Activated CD8-positive, alpha-beta memory T cell treated with anti-CD3 and anti-CD28 coated beads, Interleukin-2, amount 10 ng/mL, durations not matched to agents 7 days and 5 days (primary cell): ENCODE measurements at regions of chr3 and their contacts with region 1.

Region 1: GRCh38 chr3:32428092-32429068 is 36.7 kb downstream of the CMTM7 start:
- DNase-seq: peak; percentile 75
- ATAC-seq: peak; percentile 50
- H3K4me3 Mint-ChIP-seq: peak overlapping the region; percentile 61
- H3K27ac Mint-ChIP-seq: peak overlapping the region; percentile 99
- H3K4me1 Mint-ChIP-seq: peaks cover 91% of the 10 kb centered on the region
- H3K27me3 Mint-ChIP-seq: no peaks in the 10 kb centered on the region

Region 2: GRCh38 chr3:32282578-32283154 is 145.7 kb before region 1 on chr3:
- CTCF ChIA-PET with region 1: no interaction called
- DNase-seq: no peak
- ATAC-seq: no peak
- H3K4me3 Mint-ChIP-seq: no peak overlapping the region
- H3K27ac Mint-ChIP-seq: no peak overlapping the region
- H3K4me1 Mint-ChIP-seq: peaks cover 20% of the 10 kb centered on the region
- H3K27me3 Mint-ChIP-seq: peaks cover 3% of the 10 kb centered on the region

Region 3: GRCh38 chr3:32401556-32402081 is 26.8 kb before region 1 on chr3:
- CTCF ChIA-PET with region 1: interaction called, 21 read pairs
- DNase-seq: peak; percentile 81
- ATAC-seq: peak; percentile 87
- H3K4me3 Mint-ChIP-seq: peak overlapping the region; percentile 76
- H3K27ac Mint-ChIP-seq: peak overlapping the region; percentile 93
- H3K4me1 Mint-ChIP-seq: peaks cover 65% of the 10 kb centered on the region
- H3K27me3 Mint-ChIP-seq: no peaks in the 10 kb centered on the region

Region 4: GRCh38 chr3:32414520-32415202 is 13.7 kb before region 1 on chr3:
- CTCF ChIA-PET with region 1: interaction called, 12 read pairs
- DNase-seq: peak; percentile 79
- ATAC-seq: peak; percentile 95
- H3K4me3 Mint-ChIP-seq: peak overlapping the region; percentile 41
- H3K27ac Mint-ChIP-seq: peak overlapping the region; percentile 86
- H3K4me1 Mint-ChIP-seq: peaks cover 66% of the 10 kb centered on the region
- H3K27me3 Mint-ChIP-seq: no peaks in the 10 kb centered on the region

Region 5: DNA sequence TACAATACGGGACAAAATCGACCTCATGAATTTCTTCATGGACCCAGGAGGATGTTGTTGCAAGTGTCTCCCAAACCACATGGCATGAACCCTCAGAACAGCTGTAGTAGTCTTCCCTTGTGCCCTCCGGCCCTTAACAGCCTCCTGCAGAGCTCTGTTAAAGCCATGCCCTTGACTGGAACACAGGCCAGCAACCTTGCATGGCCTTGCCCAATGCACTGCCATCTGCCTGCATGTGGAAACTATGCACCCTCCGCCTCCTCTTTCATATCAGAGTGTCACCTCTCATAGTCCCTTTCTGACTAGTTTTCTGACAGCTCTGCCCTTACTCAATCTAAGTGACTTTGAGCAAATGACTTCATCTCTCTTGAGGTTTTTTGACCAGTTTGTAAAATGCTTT is 350.0 kb after region 1 on chr3:
- CTCF ChIA-PET with region 1: no interaction called
- DNase-seq: no peak
- ATAC-seq: no peak
- H3K4me3 Mint-ChIP-seq: no peak overlapping the region
- H3K27ac Mint-ChIP-seq: no peak overlapping the region
- H3K4me1 Mint-ChIP-seq: peaks cover 10% of the 10 kb centered on the region
- H3K27me3 Mint-ChIP-seq: peaks cover 9% of the 10 kb centered on the region